K562 (cell line): ENCODE measurements at regions of chr12 and their contacts with region 1.

Region 1: GRCh38 chr12:52167954-52168717 is 23.7 kb downstream of the KRT80 start:
- DNase-seq: no peak
- ATAC-seq: no peak
- H3K4me3 ChIP-seq: no peak overlapping the region
- H3K27ac ChIP-seq: no peak overlapping the region
- H3K4me1 ChIP-seq: peaks cover 0 to 3% of the 10 kb centered on the region in 2 experiments; a peak in 1 of 5 replicates
- H3K27me3 ChIP-seq: peaks cover 12 to 60% of the 10 kb centered on the region in 2 experiments
- CTCF ChIP-seq: no peak
- EP300 ChIP-seq: no peak
- POLR2A ChIP-seq: no peak
- RAD21 ChIP-seq: no peak

Region 2: GRCh38 chr12:52126605-52127578 is 41.2 kb before region 1 on chr12:
- CTCF ChIA-PET with region 1: no interaction called
- POLR2A ChIA-PET with region 1: no interaction called
- in situ Hi-C with region 1: no loop called
- intact Hi-C with region 1: no loop called
- DNase-seq: peak in 1 of 4 experiments; percentile 7
- ATAC-seq: no peak
- H3K4me3 ChIP-seq: no peak overlapping the region
- H3K27ac ChIP-seq: no peak overlapping the region
- H3K4me1 ChIP-seq: peaks cover 0 to 14% of the 10 kb centered on the region in 2 experiments; a peak in 1 of 5 replicates
- H3K27me3 ChIP-seq: peaks cover 23 to 56% of the 10 kb centered on the region in 2 experiments; a peak in 4 of 5 replicates
- CTCF ChIP-seq: no peak
- EP300 ChIP-seq: no peak
- POLR2A ChIP-seq: no peak
- RAD21 ChIP-seq: no peak

Region 3: DNA sequence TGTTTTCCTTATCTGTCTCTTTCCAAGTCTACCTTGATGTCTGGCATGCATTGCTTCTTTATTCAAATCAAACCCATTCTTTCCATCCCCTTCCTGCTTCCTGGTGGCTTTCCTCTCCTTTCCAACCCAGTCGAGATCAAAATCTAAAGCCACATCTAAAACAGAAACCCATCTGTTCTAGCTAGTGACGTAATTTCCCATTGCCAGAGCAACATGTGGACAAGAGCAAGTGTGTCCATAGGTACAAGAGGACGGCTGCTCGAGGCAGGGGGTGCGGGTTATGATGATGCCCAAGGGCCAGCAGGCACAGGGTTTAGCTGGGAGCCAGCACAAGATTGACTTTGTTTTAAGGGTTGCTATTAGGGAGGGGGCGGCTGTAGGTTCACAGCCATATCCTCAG is 16.7 kb after region 1 on chr12:
- CTCF ChIA-PET with region 1: no interaction called
- POLR2A ChIA-PET with region 1: interaction called, 4 read pairs
- in situ Hi-C with region 1: no loop called
- intact Hi-C with region 1: loop called (anchors 2 kb)
- DNase-seq: no peak
- ATAC-seq: no peak
- H3K4me3 ChIP-seq: no peak overlapping the region
- H3K27ac ChIP-seq: no peak overlapping the region
- H3K4me1 ChIP-seq: no peaks in the 10 kb centered on the region; a peak in 1 of 5 replicates
- H3K27me3 ChIP-seq: peaks cover 5 to 47% of the 10 kb centered on the region in 2 experiments; a peak in 3 of 5 replicates
- CTCF ChIP-seq: no peak
- EP300 ChIP-seq: no peak
- POLR2A ChIP-seq: no peak
- RAD21 ChIP-seq: no peak